CD8-positive, alpha-beta T cell (primary cell): ENCODE measurements at regions of chr3 and their contacts with region 1.

Region 1: DNA sequence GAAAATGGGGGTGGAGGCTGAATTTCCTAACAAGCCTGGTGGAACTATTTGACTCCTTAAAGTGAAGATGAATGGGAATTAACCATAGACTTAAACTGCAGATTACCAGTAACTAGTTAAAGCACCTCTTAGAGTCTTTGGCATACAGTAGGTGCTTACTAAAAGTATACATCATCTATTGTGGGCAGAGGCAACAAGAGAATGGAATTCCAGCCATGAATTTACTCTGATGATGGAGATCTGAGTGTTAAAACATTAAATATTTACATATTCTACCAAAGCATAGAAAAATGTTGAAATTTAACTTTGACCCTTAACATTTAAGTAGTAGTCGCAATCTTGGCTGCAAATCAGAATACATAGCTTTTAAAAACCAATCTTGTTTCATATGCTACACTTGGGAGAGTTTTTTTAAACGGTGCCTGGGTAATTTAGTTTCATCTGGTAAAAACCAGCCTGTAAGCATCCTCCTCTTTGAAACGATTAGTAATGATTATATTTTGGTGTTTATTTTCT is 5.2 kb downstream of the UBA5 start:
- DNase-seq: no peak
- ATAC-seq: no peak
- H3K4me3 ChIP-seq: no peak overlapping the region
- H3K4me3 Mint-ChIP-seq: no peak overlapping the region
- H3K27ac ChIP-seq: no peak overlapping the region
- H3K27ac Mint-ChIP-seq: no peak overlapping the region
- H3K4me1 ChIP-seq: peaks cover 14% of the 10 kb centered on the region
- H3K4me1 Mint-ChIP-seq: peaks cover 57% of the 10 kb centered on the region
- H3K27me3 ChIP-seq: no peaks in the 10 kb centered on the region
- H3K27me3 Mint-ChIP-seq: no peaks in the 10 kb centered on the region
- CTCF ChIP-seq: no peak

Region 2: GRCh38 chr3:132709761-132710160 is 44.5 kb after region 1 on chr3:
- CTCF ChIA-PET with region 1: no interaction called
- POLR2A ChIA-PET with region 1: no interaction called
- intact Hi-C with region 1: loop called in 1 of 2 experiments (anchors 2 kb)
- DNase-seq: no peak
- ATAC-seq: no peak
- H3K4me3 ChIP-seq: no peak overlapping the region
- H3K4me3 Mint-ChIP-seq: no peak overlapping the region
- H3K27ac ChIP-seq: no peak overlapping the region
- H3K27ac Mint-ChIP-seq: no peak overlapping the region
- H3K4me1 ChIP-seq: no peaks in the 10 kb centered on the region
- H3K4me1 Mint-ChIP-seq: peaks cover 10% of the 10 kb centered on the region
- H3K27me3 ChIP-seq: no peaks in the 10 kb centered on the region
- H3K27me3 Mint-ChIP-seq: no peaks in the 10 kb centered on the region
- CTCF ChIP-seq: no peak

Region 3: GRCh38 chr3:132892951-132893350 is 227.7 kb after region 1 on chr3:
- CTCF ChIA-PET with region 1: no interaction called
- POLR2A ChIA-PET with region 1: no interaction called
- intact Hi-C with region 1: no loop called
- DNase-seq: no peak
- ATAC-seq: no peak
- H3K4me3 ChIP-seq: no peak overlapping the region
- H3K4me3 Mint-ChIP-seq: no peak overlapping the region
- H3K27ac ChIP-seq: no peak overlapping the region
- H3K27ac Mint-ChIP-seq: no peak overlapping the region
- H3K4me1 ChIP-seq: no peaks in the 10 kb centered on the region
- H3K4me1 Mint-ChIP-seq: no peaks in the 10 kb centered on the region
- H3K27me3 ChIP-seq: no peaks in the 10 kb centered on the region
- H3K27me3 Mint-ChIP-seq: no peaks in the 10 kb centered on the region
- CTCF ChIP-seq: no peak